CD4-positive, alpha-beta T cell (primary cell): ENCODE measurements at regions of chr6 and their contacts with region 1.

Region 1: DNA sequence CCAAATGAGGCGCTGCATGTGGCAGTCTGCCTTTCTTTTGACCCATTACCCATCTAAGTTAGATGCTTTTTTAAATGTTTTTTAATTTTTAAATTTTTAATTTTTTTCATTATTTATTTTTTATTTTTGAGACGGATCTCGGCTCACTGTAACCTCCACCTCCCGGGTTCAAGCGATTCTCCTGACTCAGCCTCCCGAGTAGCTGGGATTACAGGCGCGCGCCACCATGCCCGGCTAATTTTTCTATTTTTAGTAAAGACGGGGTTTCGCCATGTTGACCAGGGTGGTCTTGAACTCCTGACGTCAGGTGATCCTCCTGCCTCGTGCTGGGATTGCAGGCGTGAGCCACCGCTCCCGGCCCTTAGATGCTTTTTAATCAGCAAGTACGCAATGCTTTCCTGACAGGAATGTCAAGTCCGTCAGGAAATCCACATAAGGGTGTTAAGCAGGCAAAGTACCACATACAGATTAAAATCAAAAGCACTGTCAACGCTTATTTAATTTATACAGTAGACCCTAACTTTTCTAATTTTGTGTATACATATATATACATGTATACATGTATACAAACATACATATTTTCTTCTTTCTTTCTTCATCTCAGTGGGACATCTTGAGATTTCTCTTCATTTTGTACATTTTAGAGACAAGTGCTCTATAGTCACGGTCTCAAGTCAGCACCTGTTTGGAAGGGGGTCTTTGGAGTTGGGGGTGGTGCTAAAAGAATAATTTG is 995 bp upstream of the GSTA4 start:
- DNase-seq: peak in 13 of 14 experiments; percentile 2 to 75 (median 27)
- ATAC-seq: peak; percentile 7
- H3K4me3 ChIP-seq: peak overlapping the region; percentile 74
- H3K4me3 Mint-ChIP-seq: peak overlapping the region; percentile 91
- H3K27ac ChIP-seq: no peak overlapping the region
- H3K27ac Mint-ChIP-seq: peak overlapping the region; percentile 100
- H3K4me1 ChIP-seq: peaks cover 15% of the 10 kb centered on the region
- H3K4me1 Mint-ChIP-seq: peaks cover 24% of the 10 kb centered on the region
- H3K27me3 ChIP-seq: no peaks in the 10 kb centered on the region
- H3K27me3 Mint-ChIP-seq: peaks cover 14% of the 10 kb centered on the region
- CTCF ChIP-seq: no peak

Region 2: GRCh38 chr6:52577022-52577777 is 418.9 kb before region 1 on chr6 and contains the start of gene TRAM2:
- CTCF ChIA-PET with region 1: no interaction called
- POLR2A ChIA-PET with region 1: interaction called, 4 read pairs
- intact Hi-C with region 1: loop called in 1 of 2 experiments (anchors 10 kb)
- DNase-seq: peak; percentile 61 to 92 (median 75)
- ATAC-seq: peak; percentile 67
- H3K4me3 ChIP-seq: peak within 1 kb of the TSS; percentile 69
- H3K4me3 Mint-ChIP-seq: peak within 1 kb of the TSS; percentile 86
- H3K27ac ChIP-seq: peak within 1 kb of the TSS in 1 of 2 donors; percentile 60
- H3K27ac Mint-ChIP-seq: peak within 1 kb of the TSS; percentile 86
- H3K4me1 ChIP-seq: peaks cover 39% of the 10 kb centered on the region
- H3K4me1 Mint-ChIP-seq: peaks cover 56% of the 10 kb centered on the region
- H3K27me3 ChIP-seq: no peaks in the 10 kb centered on the region
- H3K27me3 Mint-ChIP-seq: no peaks in the 10 kb centered on the region
- CTCF ChIP-seq: no peak
- total RNA-seq, gene TRAM2: 7.1 to 7.6 TPM

Region 3: DNA sequence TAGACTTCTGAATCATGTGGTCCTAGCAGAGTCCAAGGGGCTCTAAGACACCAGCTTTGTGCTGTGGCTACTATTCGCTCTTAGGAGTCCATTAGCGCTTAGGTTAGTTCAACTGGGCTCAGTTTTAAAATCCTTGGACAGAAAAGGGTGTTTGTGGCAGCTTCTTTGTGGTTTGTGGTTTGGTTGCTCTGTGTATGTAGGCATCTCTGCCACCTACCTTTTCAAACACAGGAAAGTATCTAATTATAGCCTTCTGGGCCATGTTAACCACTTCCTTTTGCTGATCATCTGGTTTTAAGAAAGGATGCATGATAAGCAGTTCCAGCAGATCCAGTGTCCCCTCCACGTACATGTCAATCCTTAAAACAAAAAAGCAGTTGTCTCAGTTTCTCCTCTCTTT is 11.8 kb before region 1 on chr6:
- CTCF ChIA-PET with region 1: interaction called, 4 read pairs
- POLR2A ChIA-PET with region 1: interaction called, 35 read pairs
- intact Hi-C with region 1: loop called in 1 of 2 experiments (anchors 1 kb)
- DNase-seq: peak in 8 of 14 experiments; percentile 7 to 91 (median 24)
- ATAC-seq: peak; percentile 90
- H3K4me3 ChIP-seq: peak overlapping the region; percentile 13
- H3K4me3 Mint-ChIP-seq: peak overlapping the region; percentile 73
- H3K27ac ChIP-seq: no peak overlapping the region
- H3K27ac Mint-ChIP-seq: no peak overlapping the region
- H3K4me1 ChIP-seq: peaks cover 37% of the 10 kb centered on the region
- H3K4me1 Mint-ChIP-seq: peaks cover 34% of the 10 kb centered on the region
- H3K27me3 ChIP-seq: peaks cover 8 to 10% of the 10 kb centered on the region in 2 experiments
- H3K27me3 Mint-ChIP-seq: peaks cover 61% of the 10 kb centered on the region
- CTCF ChIP-seq: no peak

Region 4: GRCh38 chr6:53322188-53323029 is 326.3 kb after region 1 on chr6:
- CTCF ChIA-PET with region 1: no interaction called
- POLR2A ChIA-PET with region 1: no interaction called
- intact Hi-C with region 1: no loop called
- DNase-seq: no peak
- ATAC-seq: no peak
- H3K4me3 ChIP-seq: no peak overlapping the region
- H3K4me3 Mint-ChIP-seq: no peak overlapping the region
- H3K27ac ChIP-seq: no peak overlapping the region
- H3K27ac Mint-ChIP-seq: peak overlapping the region; percentile 61
- H3K4me1 ChIP-seq: peaks cover 32% of the 10 kb centered on the region
- H3K4me1 Mint-ChIP-seq: peaks cover 79% of the 10 kb centered on the region
- H3K27me3 ChIP-seq: no peaks in the 10 kb centered on the region
- H3K27me3 Mint-ChIP-seq: no peaks in the 10 kb centered on the region
- CTCF ChIP-seq: no peak

Region 5: GRCh38 chr6:53544470-53545308 is 548.6 kb after region 1 on chr6 and contains the start of gene GCLC:
- CTCF ChIA-PET with region 1: no interaction called
- POLR2A ChIA-PET with region 1: interaction called, 3 read pairs
- intact Hi-C with region 1: loop called in 1 of 2 experiments (anchors 10 kb)
- DNase-seq: peak; percentile 71 to 95 (median 83)
- ATAC-seq: peak; percentile 60
- H3K4me3 ChIP-seq: peak within 1 kb of the TSS; percentile 54
- H3K4me3 Mint-ChIP-seq: peak within 1 kb of the TSS; percentile 99
- H3K27ac ChIP-seq: peak within 1 kb of the TSS in 1 of 2 donors; percentile 31
- H3K27ac Mint-ChIP-seq: peak within 1 kb of the TSS; percentile 69
- H3K4me1 ChIP-seq: peaks cover 43% of the 10 kb centered on the region
- H3K4me1 Mint-ChIP-seq: peaks cover 74% of the 10 kb centered on the region
- H3K27me3 ChIP-seq: no peaks in the 10 kb centered on the region
- H3K27me3 Mint-ChIP-seq: no peaks in the 10 kb centered on the region
- CTCF ChIP-seq: peak; percentile 67
- total RNA-seq, gene GCLC: 8.9 to 10.1 TPM

Region 6: GRCh38 chr6:53794720-53795253 is 798.7 kb after region 1 on chr6 and contains the start of gene LRRC1:
- CTCF ChIA-PET with region 1: no interaction called
- POLR2A ChIA-PET with region 1: no interaction called
- intact Hi-C with region 1: loop called in 1 of 2 experiments (anchors 5 kb)
- DNase-seq: peak; percentile 65 to 91 (median 78)
- ATAC-seq: peak; percentile 63
- H3K4me3 ChIP-seq: peak within 1 kb of the TSS; percentile 83
- H3K4me3 Mint-ChIP-seq: peak within 1 kb of the TSS; percentile 97
- H3K27ac ChIP-seq: no peak within 1 kb of the TSS
- H3K27ac Mint-ChIP-seq: peak within 1 kb of the TSS; percentile 82
- H3K4me1 ChIP-seq: peaks cover 28% of the 10 kb centered on the region
- H3K4me1 Mint-ChIP-seq: peaks cover 34% of the 10 kb centered on the region
- H3K27me3 ChIP-seq: peaks cover 5 to 13% of the 10 kb centered on the region in 2 experiments
- H3K27me3 Mint-ChIP-seq: peaks cover 13% of the 10 kb centered on the region
- CTCF ChIP-seq: no peak
- total RNA-seq, gene LRRC1: 0.78 to 1.1 TPM